ENCODE measurements at regions of chr11 and their contacts with region 1.

Region 1: DNA sequence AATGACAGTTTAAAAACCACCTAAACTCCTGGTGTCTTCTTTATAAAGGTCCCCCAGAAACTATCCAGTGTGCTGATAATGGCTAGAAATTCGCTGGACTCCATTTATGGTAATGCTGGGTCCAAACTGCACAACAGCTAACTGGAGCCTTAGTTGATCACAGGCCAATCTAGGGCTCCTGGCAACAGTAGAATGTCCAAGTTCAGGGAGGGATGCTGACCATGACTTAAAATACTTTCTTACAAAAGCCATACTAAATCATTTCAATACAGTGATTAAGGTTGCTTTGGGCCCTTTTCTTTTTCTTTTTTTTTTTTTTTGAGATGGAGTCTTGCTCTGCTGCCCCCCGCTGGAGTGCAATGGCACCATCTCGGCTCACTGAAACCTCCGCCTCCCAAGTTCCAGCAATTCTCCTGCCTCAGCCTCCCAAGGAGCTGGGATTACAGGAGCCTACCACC is 14.5 kb upstream of the GAB2 start:
- DNase-seq: peak in 1 of 2 experiments; percentile 64
- H3K4me3 ChIP-seq: no peak overlapping the region
- H3K4me3 Mint-ChIP-seq: no peak overlapping the region
- H3K27ac Mint-ChIP-seq: no peak overlapping the region
- H3K4me1 ChIP-seq: peaks cover 14% of the 10 kb centered on the region
- H3K4me1 Mint-ChIP-seq: peaks cover 28% of the 10 kb centered on the region
- H3K27me3 ChIP-seq: no peaks in the 10 kb centered on the region
- H3K27me3 Mint-ChIP-seq: no peaks in the 10 kb centered on the region
- CTCF ChIP-seq: peak; percentile 67 to 83

Region 2: DNA sequence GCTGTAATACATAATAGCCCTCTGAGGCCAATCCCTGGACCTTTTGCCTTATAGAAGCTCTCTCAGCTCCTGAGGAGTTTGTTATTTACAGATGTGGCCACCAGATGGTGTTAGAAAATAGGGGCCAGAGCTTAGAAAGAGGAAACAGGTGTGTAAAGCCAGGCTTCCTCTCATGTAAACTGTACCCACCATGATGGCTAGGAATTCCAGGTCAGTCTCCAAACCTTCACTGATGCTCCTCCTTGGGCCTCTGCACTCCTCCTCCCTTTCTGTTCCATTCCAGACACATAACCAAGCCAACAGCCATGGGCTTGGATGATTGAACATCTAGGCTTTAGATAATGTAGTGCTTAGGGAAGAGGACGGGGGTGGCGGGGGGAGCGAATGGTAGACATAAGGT is 203.6 kb before region 1 on chr11:
- CTCF ChIA-PET with region 1: interaction called, 14 read pairs
- POLR2A ChIA-PET with region 1: no interaction called
- intact Hi-C with region 1: loop called (anchors 1 kb)
- DNase-seq: peak; percentile 72 to 81
- H3K4me3 ChIP-seq: no peak overlapping the region
- H3K4me3 Mint-ChIP-seq: no peak overlapping the region
- H3K27ac Mint-ChIP-seq: peak overlapping the region; percentile 24
- H3K4me1 ChIP-seq: no peaks in the 10 kb centered on the region
- H3K4me1 Mint-ChIP-seq: no peaks in the 10 kb centered on the region
- H3K27me3 ChIP-seq: no peaks in the 10 kb centered on the region
- H3K27me3 Mint-ChIP-seq: no peaks in the 10 kb centered on the region
- CTCF ChIP-seq: peak; percentile 79 to 88

Region 3: DNA sequence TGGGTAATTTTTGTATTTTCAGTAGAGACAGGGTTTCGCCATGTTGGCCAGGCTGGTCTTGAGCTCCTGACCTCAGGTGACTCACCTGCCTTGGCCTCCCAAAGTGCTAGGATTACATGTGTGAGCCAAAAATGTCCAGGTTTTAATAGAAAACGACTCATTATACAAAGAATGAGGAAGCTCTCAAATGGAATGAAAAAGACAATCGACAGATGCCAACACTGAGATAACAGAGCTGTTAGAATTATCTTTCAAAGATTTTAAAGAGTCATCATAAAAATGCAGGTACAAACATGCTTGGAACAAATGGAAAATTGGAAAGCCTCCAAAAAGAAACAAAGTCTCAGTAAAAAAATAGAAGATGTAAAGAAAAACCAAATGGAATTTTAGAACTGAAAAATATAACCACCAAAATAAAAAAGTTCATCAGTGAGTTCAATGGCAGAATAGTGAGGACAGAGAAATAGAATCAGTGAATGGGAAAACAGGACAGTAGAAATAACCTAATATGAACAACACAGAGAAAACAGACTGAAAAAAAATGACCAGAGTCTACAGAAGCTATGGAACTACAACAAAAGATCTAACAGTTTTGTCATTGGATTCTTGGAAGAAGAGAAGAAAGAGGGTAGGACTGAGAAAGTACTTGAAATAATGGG is 25.4 kb before region 1 on chr11:
- CTCF ChIA-PET with region 1: no interaction called
- POLR2A ChIA-PET with region 1: no interaction called
- intact Hi-C with region 1: no loop called
- DNase-seq: no peak
- H3K4me3 ChIP-seq: no peak overlapping the region
- H3K4me3 Mint-ChIP-seq: no peak overlapping the region
- H3K27ac Mint-ChIP-seq: peak overlapping the region; percentile 74
- H3K4me1 ChIP-seq: peaks cover 18% of the 10 kb centered on the region
- H3K4me1 Mint-ChIP-seq: peaks cover 52% of the 10 kb centered on the region
- H3K27me3 ChIP-seq: no peaks in the 10 kb centered on the region
- H3K27me3 Mint-ChIP-seq: no peaks in the 10 kb centered on the region
- CTCF ChIP-seq: no peak

Region 4: GRCh38 chr11:78469901-78470300 is 37.8 kb after region 1 on chr11:
- CTCF ChIA-PET with region 1: no interaction called
- POLR2A ChIA-PET with region 1: no interaction called
- intact Hi-C with region 1: loop called (anchors 2 kb)
- DNase-seq: no peak
- H3K4me3 ChIP-seq: no peak overlapping the region
- H3K4me3 Mint-ChIP-seq: no peak overlapping the region
- H3K27ac Mint-ChIP-seq: no peak overlapping the region
- H3K4me1 ChIP-seq: peaks cover 8% of the 10 kb centered on the region; the same call in 1 of the 2 replicates
- H3K4me1 Mint-ChIP-seq: peaks cover 17% of the 10 kb centered on the region
- H3K27me3 ChIP-seq: no peaks in the 10 kb centered on the region
- H3K27me3 Mint-ChIP-seq: no peaks in the 10 kb centered on the region
- CTCF ChIP-seq: no peak

Measured in Caco-2 (cell line).